B cell (primary cell): ENCODE measurements at regions of chr2 and their contacts with region 1.

Region 1: GRCh38 chr2:127086990-127087790 is 19.8 kb downstream of the BIN1 start:
- DNase-seq: peak; percentile 76
- ATAC-seq: peak; percentile 1
- H3K4me3 ChIP-seq: peak overlapping the region in 4 of 5 experiments; percentile 23 to 72 (median 44)
- H3K4me3 Mint-ChIP-seq: peak overlapping the region; percentile 81
- H3K27ac ChIP-seq: peak overlapping the region; percentile 42 to 55
- H3K27ac Mint-ChIP-seq: peak overlapping the region; percentile 90
- H3K4me1 ChIP-seq: peaks cover 53 to 62% of the 10 kb centered on the region in 2 donors
- H3K4me1 Mint-ChIP-seq: peaks cover 61% of the 10 kb centered on the region
- H3K27me3 ChIP-seq: no peaks in the 10 kb centered on the region
- H3K27me3 Mint-ChIP-seq: no peaks in the 10 kb centered on the region
- CTCF ChIP-seq: no peak

Region 2: DNA sequence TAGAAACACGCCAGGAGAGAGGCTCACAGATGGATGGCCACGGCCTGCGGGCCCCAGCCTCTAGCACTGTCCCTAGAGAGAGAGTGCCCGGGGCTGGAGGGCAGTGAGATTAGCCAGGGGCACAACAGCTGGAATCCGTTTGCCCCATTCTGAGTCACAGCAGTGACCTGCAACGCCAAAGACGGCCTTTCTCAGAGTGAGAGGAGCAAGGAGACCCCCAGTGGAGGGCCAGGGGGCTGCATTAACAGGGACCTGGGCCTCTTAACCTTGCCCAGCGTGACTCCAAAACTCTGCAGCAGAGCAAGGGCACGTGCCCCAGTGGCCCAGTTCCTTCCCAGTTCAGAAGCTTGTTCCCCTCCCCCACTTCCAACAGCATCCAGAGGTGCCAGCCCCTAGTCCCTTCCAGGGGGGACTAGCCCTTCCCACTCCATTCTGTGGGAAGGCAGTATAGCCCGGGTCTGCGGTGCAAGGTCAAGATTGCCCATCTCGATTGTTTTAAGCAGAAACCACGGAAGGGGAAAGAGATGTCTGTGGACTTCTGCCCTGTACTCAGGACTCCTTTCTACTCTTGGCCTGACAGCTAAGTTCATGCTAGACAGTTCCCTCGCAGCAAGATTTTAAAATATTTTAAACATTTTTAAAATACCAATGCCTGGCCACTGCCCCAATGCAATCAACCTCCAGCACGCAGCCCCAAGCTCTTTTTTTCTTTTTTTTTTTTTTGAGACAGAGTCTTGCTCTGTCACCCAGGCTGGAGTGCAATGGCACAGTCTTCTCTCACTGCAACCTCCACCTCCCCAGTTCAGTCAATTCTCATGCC is 70.7 kb after region 1 on chr2:
- CTCF ChIA-PET with region 1: no interaction called
- POLR2A ChIA-PET with region 1: no interaction called
- intact Hi-C with region 1: loop called (anchors 5 kb)
- DNase-seq: no peak
- ATAC-seq: no peak
- H3K4me3 ChIP-seq: no peak overlapping the region
- H3K4me3 Mint-ChIP-seq: no peak overlapping the region
- H3K27ac ChIP-seq: no peak overlapping the region
- H3K27ac Mint-ChIP-seq: no peak overlapping the region
- H3K4me1 ChIP-seq: peaks cover 22 to 42% of the 10 kb centered on the region in 2 donors
- H3K4me1 Mint-ChIP-seq: peaks cover 30% of the 10 kb centered on the region
- H3K27me3 ChIP-seq: peaks cover 0 to 4% (median 0%) of the 10 kb centered on the region in 4 experiments
- H3K27me3 Mint-ChIP-seq: no peaks in the 10 kb centered on the region
- CTCF ChIP-seq: no peak

Region 3: DNA sequence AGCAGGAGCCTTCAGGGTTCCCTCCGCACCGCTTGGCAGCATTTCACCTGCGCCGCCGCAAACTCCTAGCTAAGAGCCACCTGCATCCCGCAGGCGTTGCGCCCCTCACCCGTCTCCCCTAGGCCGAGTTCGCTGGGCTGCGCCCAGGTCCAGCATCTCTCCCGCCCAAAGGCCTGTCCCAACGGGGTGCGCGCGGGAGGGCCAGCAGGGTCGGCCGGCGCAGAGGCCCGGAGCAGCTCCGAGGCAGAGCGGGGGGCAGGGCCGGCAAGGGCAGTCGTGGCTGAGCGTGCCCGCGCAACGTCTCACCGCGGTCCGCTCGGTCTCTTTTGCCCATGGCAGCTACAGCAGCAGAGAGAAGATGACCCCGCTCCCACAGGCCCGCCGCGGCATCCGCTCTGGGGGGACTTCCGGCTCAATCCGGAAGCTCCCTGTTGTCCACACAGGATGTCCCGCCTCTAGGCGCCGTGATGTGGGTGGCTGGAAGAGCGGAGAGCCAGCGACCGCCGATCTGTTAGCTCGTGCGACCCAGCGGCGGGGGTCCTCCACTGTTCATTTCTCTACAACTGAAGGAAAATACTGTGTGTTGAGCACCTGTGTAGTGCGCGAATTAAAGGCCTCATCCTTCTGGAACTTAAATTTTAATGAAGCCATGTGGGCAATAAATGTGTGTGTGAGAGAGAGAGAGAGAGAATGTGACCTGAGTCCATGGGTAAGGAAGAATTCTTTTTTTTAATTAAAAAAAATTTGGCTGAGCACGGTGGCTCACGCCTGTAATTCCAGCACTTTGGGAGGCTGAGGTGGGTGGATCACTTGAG is 206.8 kb after region 1 on chr2 and contains the start of gene ERCC3:
- CTCF ChIA-PET with region 1: no interaction called
- POLR2A ChIA-PET with region 1: no interaction called
- intact Hi-C with region 1: loop called (anchors 10 kb)
- DNase-seq: peak; percentile 86
- ATAC-seq: peak; percentile 96
- H3K4me3 ChIP-seq: peak within 1 kb of the TSS; percentile 82 to 97 (median 88)
- H3K4me3 Mint-ChIP-seq: peak within 1 kb of the TSS; percentile 100
- H3K27ac ChIP-seq: peak within 1 kb of the TSS; percentile 46 to 84
- H3K27ac Mint-ChIP-seq: peak within 1 kb of the TSS; percentile 95
- H3K4me1 ChIP-seq: peaks cover 5 to 22% of the 10 kb centered on the region in 2 donors
- H3K4me1 Mint-ChIP-seq: peaks cover 31% of the 10 kb centered on the region
- H3K27me3 ChIP-seq: no peaks in the 10 kb centered on the region
- H3K27me3 Mint-ChIP-seq: no peaks in the 10 kb centered on the region
- CTCF ChIP-seq: no peak
- total RNA-seq, gene ERCC3: 74.8 and 79.3 TPM in 2 replicates